ENCODE measurements at regions of chr13 and their contacts with region 1.

Region 1: DNA sequence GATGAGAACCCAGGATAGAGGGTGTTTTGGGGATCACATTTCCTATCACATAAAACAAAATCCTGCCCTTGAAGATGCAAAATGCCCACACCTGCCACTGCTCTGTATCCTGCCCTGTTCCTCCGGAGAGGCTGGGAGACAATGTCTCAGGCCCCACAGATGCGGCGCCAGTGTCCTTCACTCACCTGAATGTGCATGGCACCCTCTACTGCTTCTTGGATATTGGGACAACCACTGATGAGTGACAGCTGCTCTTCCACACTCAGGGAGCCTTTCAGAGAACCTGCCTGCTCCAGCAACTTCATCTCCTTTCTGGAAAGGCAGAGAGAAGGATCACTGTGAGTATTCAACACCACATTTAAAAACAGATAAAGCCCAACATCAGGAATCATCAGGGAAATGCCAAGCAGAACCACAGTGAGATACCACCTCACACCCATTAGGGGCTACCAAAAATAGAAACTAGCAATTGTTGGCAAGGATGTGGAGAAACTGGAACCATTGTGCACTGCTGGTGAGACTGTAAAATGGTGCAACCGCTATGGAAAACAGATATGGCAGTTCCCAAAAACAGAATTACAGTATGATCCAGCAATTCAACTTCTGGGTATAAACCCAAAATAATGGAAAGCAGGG is 36.4 kb downstream of the CRYL1 start:
- DNase-seq: no peak

Region 2: GRCh38 chr13:20182231-20182846 is 307.0 kb before region 1 on chr13:
- intact Hi-C with region 1: loop called (anchors 5 kb)
- DNase-seq: no peak